Activated CD4-positive, alpha-beta T cell treated with anti-CD3 and anti-CD28 coated beads for 36 hours (primary cell): ENCODE measurements at regions of chr1 and their contacts with region 1.

Region 1: DNA sequence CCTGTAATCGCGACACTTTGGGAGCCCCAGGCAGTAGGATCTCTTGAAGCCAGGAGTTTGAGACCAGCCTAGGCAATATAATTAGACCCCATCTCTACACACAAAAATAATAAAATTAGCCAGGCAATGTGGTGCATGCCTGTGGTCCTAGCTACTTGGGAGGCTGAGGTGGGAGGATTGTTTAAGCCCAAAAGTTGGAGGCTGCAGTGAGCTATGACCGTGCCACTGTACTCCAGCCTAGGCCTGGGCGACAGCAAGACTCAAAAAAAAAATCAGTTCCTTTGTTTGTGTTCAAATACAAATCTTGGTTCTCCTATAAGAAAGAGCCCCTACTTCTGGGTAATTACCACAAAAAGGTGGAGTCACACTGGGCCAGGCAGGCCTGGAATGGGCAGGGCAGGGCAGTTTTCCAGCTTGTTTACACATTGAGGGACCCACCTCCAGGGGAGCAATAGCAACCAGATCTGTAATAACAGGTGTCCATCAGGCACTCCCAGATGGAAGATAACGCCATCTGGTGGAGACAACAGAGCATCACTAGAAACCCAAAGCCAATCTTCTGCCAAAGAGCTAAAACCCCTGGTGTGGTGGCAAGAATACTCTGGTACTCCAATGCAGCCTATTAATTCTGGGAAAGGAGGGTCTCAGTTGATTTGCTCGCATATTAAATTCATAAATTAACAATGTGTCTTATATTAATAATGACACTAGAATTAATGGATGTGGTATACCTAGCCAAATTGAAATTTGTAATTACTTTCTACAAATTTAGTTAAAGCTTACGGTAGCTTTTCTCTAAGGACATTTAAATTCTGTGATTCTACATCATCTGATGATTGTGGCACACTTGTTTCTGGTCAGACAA is 13.2 kb downstream of the PPP1R15B start:
- DNase-seq: peak; percentile 70
- ATAC-seq: peak; percentile 95
- H3K4me3 Mint-ChIP-seq: no peak overlapping the region
- H3K27ac Mint-ChIP-seq: peak overlapping the region; percentile 47
- H3K4me1 Mint-ChIP-seq: peaks cover 2% of the 10 kb centered on the region
- H3K27me3 Mint-ChIP-seq: no peaks in the 10 kb centered on the region

Region 2: DNA sequence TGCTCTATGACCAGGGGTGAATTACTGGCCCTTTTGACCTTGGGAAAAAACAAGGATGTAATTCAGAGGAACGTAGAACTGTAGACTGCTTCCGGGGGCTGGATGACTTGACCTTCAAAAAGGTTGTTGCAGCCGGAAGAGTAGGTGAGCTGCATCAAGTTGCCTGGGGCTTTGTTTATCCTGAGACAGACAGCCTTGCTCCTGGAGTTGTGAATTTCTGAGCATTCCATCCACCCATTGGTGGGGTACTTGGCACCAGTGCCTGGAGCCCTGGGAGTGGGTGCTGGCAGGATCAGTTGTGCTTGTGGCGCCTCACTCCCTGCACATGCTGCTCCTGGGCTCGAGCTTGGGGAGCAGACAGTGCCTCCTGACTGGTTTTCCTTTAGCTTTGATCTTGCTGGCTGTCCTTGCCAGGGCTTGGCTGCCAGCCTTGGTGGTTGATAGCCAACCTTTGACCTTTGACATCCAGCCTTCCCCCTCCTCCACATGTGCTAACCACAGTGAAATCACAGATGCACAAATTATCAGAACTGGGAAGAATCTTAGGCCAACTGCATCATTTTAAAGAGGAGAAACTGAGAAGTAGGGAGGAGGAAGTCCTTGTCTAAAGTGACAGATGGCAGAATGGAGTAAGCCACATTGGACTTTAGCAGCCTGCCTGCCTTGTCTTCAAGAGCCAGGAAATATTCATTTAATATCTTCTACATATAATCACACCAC is 1296.4 kb before region 1 on chr1:
- CTCF ChIA-PET with region 1: no interaction called
- POLR2A ChIA-PET with region 1: no interaction called
- intact Hi-C with region 1: no loop called
- DNase-seq: no peak
- ATAC-seq: no peak
- H3K4me3 Mint-ChIP-seq: no peak overlapping the region
- H3K27ac Mint-ChIP-seq: no peak overlapping the region
- H3K4me1 Mint-ChIP-seq: no peaks in the 10 kb centered on the region
- H3K27me3 Mint-ChIP-seq: peaks cover 18% of the 10 kb centered on the region

Region 3: DNA sequence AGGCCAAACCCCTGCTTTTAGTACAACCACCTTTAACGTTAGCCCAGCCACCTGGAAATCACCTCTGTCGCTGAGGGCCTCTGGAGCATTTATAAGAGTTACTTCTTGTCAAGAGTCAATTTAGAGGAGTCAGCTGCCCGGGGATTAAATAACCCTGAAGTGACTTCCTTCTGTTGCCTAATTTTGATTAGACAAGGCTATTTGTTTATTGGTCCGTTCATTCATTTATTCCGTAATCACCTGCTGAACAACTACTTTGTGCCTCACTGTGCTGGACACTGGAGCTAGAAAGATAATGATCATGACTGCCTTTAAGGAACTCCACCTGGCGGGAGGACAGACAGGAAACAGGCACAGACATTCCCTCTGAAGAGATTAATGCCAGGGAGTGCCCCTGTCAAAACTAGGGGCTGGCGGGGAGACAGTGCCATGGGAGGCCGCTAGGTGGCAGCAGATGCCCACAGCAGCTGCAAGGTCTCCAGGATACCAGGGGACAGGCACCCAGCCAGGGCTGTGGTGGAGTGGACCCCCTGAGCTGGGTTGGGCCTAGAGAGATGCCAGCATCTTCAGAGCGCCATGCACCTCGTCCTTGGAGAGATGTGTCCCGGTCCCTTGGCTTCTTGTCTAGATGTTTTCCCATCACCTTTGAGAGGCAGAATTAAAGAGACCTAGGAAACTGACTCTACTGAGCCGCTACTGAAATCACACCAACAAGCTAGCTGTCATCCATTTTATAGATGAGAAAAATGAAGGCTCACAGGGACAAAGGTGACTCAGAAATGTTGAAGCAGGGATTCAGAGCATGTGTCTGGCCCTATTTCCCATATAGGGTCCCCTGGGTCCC is 236.0 kb before region 1 on chr1:
- CTCF ChIA-PET with region 1: interaction called, 43 read pairs
- POLR2A ChIA-PET with region 1: interaction called, 3 read pairs
- intact Hi-C with region 1: loop called (anchors 1 kb)
- DNase-seq: peak; percentile 88
- ATAC-seq: peak; percentile 98
- H3K4me3 Mint-ChIP-seq: no peak overlapping the region
- H3K27ac Mint-ChIP-seq: no peak overlapping the region
- H3K4me1 Mint-ChIP-seq: peaks cover 1% of the 10 kb centered on the region
- H3K27me3 Mint-ChIP-seq: peaks cover 7% of the 10 kb centered on the region

Region 4: DNA sequence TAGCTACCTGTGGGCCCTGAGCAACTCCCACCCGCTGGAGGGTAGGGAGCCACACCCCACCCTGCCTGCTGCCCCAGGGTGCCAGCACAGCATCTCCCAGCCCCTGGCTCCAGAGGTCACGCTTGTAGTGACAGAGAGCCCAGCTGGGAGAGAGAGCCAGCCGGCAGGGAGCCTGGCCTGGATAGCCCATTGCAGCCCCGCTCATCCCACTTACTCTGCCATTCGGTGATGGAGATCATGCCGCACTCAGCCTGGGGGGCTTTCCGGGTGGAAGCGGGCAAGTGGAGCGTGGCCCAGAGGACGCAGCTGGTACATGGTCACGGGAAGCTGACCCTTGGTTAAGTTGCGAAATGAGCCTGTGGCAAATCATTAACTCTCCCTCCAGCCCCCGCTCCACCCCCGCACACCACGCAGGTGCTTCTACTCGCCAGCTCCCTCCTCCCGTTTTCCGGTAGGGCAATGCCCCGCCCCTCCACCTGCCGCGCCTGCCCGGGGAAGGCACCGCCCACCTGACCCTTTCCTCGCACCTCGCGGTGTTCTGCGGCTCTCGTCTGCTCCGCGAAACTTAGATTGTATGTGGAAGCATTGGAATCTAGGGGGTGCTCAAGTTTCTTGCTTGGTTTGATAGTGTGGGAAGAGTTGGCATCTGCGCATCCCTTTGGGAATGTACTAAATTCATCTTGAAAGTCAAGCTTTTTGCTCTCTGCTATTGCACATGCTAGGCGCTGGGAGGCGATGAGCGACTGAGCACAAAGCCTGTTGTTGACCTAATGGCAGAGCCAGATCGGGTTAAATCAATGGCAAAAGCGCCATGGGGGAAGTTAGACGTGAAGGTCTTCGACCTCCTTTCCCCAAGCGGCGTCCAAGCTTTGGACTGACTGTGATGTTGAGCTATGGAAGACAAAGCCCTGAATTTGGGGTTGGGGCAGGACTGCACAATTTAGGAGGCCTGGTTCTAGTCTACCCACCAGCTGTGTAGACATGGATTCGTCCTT is 184.5 kb before region 1 on chr1 and contains the start of gene GOLT1A:
- CTCF ChIA-PET with region 1: interaction called, 10 read pairs
- POLR2A ChIA-PET with region 1: no interaction called
- intact Hi-C with region 1: loop called (anchors 1 kb)
- DNase-seq: peak; percentile 78
- ATAC-seq: peak; percentile 79
- H3K4me3 Mint-ChIP-seq: peak within 1 kb of the TSS; percentile 34
- H3K27ac Mint-ChIP-seq: no peak within 1 kb of the TSS
- H3K4me1 Mint-ChIP-seq: peaks cover 8% of the 10 kb centered on the region
- H3K27me3 Mint-ChIP-seq: peaks cover 4% of the 10 kb centered on the region
- total RNA-seq, gene GOLT1A: 0.21 to 0.69 TPM

Region 5: GRCh38 chr1:204377795-204378608 is 20.4 kb before region 1 on chr1:
- CTCF ChIA-PET with region 1: interaction called, 45 read pairs
- POLR2A ChIA-PET with region 1: interaction called, 4 read pairs
- intact Hi-C with region 1: no loop called
- DNase-seq: peak; percentile 67
- ATAC-seq: peak; percentile 71
- H3K4me3 Mint-ChIP-seq: peak overlapping the region; percentile 66
- H3K27ac Mint-ChIP-seq: no peak overlapping the region
- H3K4me1 Mint-ChIP-seq: peaks cover 10% of the 10 kb centered on the region
- H3K27me3 Mint-ChIP-seq: peaks cover 15% of the 10 kb centered on the region

Region 6: DNA sequence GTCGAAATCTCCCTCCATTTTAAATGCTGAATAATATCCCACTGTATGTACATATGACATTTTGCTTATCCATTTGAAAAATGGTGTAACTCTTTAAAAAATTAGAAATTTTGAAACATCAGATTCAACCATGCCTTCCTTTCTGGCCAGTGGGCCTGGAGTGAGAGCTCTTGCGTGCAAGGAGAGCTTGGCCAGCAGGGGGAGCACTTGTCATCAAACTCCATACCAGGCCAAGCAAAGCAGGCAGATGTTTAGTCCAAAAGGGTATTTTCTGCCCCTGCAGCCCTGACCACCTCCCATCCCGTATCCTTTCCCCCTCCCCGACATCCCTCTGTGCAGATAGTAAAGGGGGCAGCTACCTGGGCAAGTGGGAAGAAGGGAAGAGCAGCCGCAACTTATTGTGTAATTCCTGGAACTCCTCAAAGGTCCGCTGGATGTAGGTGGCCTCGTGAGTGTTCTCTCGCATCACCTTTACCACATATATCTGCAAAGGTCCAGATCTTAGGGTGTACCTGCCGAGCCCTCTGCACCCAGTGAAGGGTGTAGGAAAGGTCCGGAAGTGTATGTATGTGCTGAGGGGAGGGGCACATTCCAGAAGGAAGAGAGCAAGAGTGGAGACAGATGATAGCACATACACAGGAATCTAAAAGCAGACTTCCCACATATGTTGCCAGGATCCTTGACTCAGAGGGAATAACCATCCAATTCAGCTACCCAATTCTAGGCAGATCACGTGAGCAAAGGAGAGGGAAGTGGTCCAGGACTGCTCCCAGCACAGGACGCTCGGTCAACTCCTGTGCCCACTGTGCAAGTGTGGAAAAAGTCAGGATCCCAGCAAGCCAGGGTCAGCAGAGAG is 33.1 kb after region 1 on chr1:
- CTCF ChIA-PET with region 1: interaction called, 15 read pairs
- POLR2A ChIA-PET with region 1: no interaction called
- intact Hi-C with region 1: no loop called
- DNase-seq: peak; percentile 91
- ATAC-seq: peak; percentile 85
- H3K4me3 Mint-ChIP-seq: no peak overlapping the region
- H3K27ac Mint-ChIP-seq: peak overlapping the region; percentile 45
- H3K4me1 Mint-ChIP-seq: peaks cover 10% of the 10 kb centered on the region
- H3K27me3 Mint-ChIP-seq: no peaks in the 10 kb centered on the region

Region 7: GRCh38 chr1:204499521-204500468 is 101.3 kb after region 1 on chr1:
- CTCF ChIA-PET with region 1: interaction called, 20 read pairs
- POLR2A ChIA-PET with region 1: no interaction called
- intact Hi-C with region 1: no loop called
- DNase-seq: no peak
- ATAC-seq: no peak
- H3K4me3 Mint-ChIP-seq: no peak overlapping the region
- H3K27ac Mint-ChIP-seq: no peak overlapping the region
- H3K4me1 Mint-ChIP-seq: peaks cover 33% of the 10 kb centered on the region
- H3K27me3 Mint-ChIP-seq: no peaks in the 10 kb centered on the region

Region 8: DNA sequence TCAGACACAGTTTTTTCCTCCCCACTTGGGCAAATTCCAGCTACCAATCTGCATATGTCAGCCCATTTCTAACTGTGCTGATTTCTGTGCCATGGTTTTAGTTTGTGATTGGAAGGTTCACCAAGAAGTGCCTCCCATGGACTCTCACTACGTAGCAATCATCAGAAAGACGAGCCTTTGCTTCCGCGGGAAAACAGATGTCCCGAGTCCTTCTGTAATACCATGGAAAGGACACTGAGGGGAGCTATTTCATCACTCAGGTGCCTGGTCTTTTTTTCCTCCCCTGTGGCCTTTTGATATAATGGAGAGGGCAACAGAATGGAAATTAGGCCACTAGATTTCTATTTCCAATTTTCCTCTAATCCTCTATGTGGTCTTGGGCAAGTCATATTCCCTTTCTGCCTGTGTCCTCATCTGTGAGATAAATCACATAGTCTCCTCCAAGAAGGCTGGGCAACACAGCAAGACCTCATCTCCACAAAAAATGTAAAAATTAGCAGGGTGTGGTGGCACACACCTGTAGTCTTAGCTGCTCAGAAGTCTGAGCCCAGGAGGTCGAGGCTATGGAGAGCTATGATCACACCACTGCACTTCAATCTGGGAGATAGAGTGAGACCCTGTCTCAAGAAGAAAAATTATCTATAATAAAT is 998.6 kb after region 1 on chr1:
- CTCF ChIA-PET with region 1: no interaction called
- POLR2A ChIA-PET with region 1: no interaction called
- intact Hi-C with region 1: no loop called
- DNase-seq: peak; percentile 38
- ATAC-seq: peak; percentile 68
- H3K4me3 Mint-ChIP-seq: no peak overlapping the region
- H3K27ac Mint-ChIP-seq: no peak overlapping the region
- H3K4me1 Mint-ChIP-seq: no peaks in the 10 kb centered on the region
- H3K27me3 Mint-ChIP-seq: peaks cover 6% of the 10 kb centered on the region